ENCODE measurements at regions of chr9 and their contacts with region 1.

Region 1: GRCh38 chr9:97598461-97599288 is 34.5 kb downstream of the TSTD2 start:
- DNase-seq: peak; percentile 69 to 88 (median 78)
- H3K4me3 ChIP-seq: no peak overlapping the region
- H3K27ac ChIP-seq: no peak overlapping the region
- H3K4me1 ChIP-seq: peaks cover 5% of the 10 kb centered on the region
- H3K27me3 ChIP-seq: no peaks in the 10 kb centered on the region
- CTCF ChIP-seq: peak; percentile 68 to 80 (median 76)
- EP300 ChIP-seq: no peak
- POLR2A ChIP-seq: no peak

Region 2: DNA sequence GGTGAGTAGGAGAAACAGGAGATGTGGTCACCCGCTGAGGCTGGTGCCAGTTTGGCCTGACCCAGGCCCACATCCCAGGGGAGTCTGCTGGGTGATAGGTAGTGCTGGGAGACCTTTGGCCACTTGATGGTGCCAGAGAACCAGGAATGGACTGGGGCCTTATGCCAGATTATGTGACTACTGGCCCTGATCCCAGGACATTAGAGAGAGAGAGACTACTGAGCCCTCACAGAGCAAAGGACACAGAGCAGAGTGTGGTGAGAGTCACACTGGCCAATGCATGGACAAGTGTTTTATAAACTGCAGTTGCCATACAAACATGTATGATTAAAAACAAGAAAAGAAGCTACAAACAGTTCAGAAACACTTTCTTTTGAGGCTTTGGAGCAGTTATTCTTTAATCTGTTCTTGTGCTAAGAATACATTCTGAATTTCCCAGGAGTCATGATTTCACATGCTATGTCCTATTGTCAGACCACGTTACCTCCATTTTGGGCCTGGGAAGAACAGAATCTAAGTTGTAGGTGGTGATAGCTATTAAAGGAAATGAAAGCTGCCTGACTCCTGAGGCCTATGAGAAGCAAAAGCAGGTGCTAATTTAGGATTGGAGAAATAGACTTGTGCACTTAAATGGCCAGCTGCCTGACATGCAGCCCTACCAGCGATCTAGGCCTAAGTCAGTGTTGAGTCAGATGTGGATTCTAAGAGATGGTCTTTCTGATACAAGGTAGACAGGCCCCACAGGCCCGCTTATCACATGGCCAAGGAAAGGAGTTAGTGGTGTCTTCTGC is 129.8 kb before region 1 on chr9:
- intact Hi-C with region 1: loop called in 2 of 4 experiments (anchors 5 kb)
- DNase-seq: peak; percentile 77 to 86 (median 80)
- H3K4me3 ChIP-seq: no peak overlapping the region
- H3K27ac ChIP-seq: peak overlapping the region in 1 of 2 donors; percentile 16
- H3K4me1 ChIP-seq: no peaks in the 10 kb centered on the region
- H3K27me3 ChIP-seq: no peaks in the 10 kb centered on the region
- CTCF ChIP-seq: peak; percentile 65 to 95 (median 86)
- EP300 ChIP-seq: no peak
- POLR2A ChIP-seq: no peak

Region 3: DNA sequence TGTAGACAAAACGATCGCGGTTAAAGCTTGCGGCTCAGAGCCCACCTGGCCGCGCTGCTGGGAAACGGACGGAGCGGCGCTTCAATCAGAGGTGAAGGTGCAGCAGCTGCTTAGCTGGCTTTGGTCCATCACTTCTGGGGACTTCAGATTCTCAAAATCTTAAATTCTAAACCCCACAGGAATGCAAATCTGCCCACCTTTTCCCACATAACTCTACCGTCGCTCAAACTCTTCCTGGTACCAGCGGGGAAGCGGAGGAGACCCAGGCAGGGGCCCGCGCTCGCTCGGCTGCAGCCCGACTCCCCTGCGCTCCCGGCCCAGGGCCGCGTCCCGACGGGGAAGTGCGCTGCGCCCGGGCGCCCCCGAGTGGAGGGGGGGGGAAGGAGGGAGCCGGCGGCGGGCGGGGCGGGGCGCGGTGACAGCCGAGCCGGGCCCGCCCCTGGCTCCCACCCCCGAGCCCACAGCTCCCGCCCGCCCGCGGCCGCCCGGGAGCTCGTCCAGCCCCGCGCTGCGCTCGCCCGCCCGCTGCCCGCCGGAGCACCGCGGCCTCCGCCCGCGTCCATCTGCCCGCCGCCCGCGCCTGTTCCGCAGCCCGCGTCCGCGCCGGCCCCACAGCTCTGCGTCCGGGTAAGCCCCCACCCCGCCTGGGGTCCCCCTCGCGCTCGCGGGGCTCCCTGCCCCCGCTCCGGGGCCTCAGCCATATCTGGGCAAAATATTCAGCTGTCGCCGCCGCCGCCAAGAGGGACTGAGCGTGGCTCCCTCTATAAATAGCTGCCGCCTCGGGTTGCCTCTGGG is 97.3 kb before region 1 on chr9 and contains the start of gene TMOD1:
- intact Hi-C with region 1: loop called in 2 of 4 experiments (anchors 5 kb)
- DNase-seq: peak; percentile 76 to 84 (median 80)
- H3K4me3 ChIP-seq: peak within 1 kb of the TSS; percentile 93
- H3K27ac ChIP-seq: peak within 1 kb of the TSS; percentile 72 to 80
- H3K4me1 ChIP-seq: peaks cover 14% of the 10 kb centered on the region
- H3K27me3 ChIP-seq: no peaks in the 10 kb centered on the region
- CTCF ChIP-seq: no peak
- EP300 ChIP-seq: no peak
- POLR2A ChIP-seq: peak; percentile 8
- total RNA-seq, gene TMOD1: 37.1 to 76.9 (median 64.0) TPM

Region 4: DNA sequence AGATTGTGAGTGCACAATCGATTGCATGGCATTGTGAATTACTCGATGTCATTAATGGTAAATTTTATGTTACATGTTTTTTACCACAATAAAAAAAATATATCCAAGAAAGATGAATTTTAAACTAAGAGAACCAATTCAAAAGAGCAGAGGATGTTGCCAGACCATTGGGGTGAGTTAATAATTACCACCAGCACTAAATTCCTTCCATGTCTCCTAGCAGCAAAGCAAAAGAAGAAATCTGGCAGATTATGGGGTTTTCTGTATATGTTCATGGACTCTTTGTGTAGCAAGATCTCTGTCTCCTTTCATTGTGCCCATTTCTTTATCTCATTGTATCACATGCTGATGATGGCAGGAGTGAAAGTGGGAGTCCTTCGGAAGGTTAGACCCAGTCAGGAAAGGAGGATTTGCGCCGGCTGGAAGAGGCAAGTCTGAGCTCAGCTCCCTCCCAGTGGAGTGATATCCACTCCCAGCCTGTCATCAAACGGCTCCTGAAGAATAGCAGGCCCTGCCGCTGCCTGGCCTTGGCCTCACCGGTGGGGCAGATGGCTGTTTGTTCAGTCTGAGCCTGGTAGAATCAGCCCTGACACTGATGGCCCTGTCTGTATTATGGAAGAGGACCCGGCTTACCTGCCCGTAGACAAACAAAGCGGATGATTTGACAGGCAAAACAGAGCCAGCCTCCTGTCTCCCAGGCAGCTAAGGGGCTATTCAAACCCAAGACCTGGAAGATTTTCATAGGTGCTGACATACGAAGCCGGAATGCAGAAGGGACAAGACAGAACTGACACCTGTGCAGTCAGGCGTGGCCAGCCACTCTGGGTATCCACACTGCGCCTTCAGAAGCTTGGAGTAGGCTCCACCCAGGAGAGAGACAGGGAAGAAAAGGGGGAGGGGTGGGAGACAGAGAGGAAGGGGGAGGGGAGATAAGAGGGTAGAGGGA is 232.5 kb after region 1 on chr9:
- intact Hi-C with region 1: no loop called
- DNase-seq: no peak
- H3K4me3 ChIP-seq: no peak overlapping the region
- H3K27ac ChIP-seq: no peak overlapping the region
- H3K4me1 ChIP-seq: peaks cover 2% of the 10 kb centered on the region
- H3K27me3 ChIP-seq: no peaks in the 10 kb centered on the region
- CTCF ChIP-seq: no peak
- EP300 ChIP-seq: no peak
- POLR2A ChIP-seq: no peak

Measured in ovary (tissue), 10 donors.